ENCODE measurements at regions of chr14 and their contacts with region 1.

Region 1: DNA sequence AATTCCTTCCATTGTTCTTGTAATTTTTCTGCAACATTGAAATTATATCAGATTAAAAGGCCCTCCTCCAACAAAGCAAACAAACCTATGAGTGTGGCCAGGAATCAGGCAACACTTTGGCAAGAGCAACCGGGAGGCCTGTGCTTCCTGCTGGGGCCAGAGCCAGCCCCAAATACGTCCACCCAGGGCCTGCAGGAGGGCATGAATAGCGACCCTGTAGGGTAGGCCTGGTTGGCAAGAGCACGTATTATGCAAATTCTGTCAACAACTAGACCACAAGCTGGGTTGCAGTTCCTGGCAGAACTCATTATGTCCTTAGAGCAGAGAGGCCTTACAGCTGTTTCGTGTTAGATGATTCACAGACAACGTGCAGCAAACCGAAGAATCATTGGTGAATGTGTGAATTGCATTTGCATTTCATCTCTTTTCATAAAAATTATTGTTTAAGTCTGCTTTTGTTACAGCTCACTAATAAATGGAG is 26.9 kb upstream of the LGALS3 start:
- DNase-seq: peak; percentile 52
- ATAC-seq: peak; percentile 63
- H3K4me3 Mint-ChIP-seq: peak overlapping the region; percentile 70
- H3K27ac Mint-ChIP-seq: peak overlapping the region; percentile 99
- H3K4me1 Mint-ChIP-seq: peaks cover 60% of the 10 kb centered on the region
- H3K27me3 Mint-ChIP-seq: no peaks in the 10 kb centered on the region

Region 2: GRCh38 chr14:55015006-55015405 is 87.2 kb before region 1 on chr14:
- POLR2A ChIA-PET with region 1: no interaction called
- DNase-seq: no peak
- ATAC-seq: no peak
- H3K4me3 Mint-ChIP-seq: no peak overlapping the region
- H3K27ac Mint-ChIP-seq: no peak overlapping the region
- H3K4me1 Mint-ChIP-seq: peaks cover 8% of the 10 kb centered on the region
- H3K27me3 Mint-ChIP-seq: no peaks in the 10 kb centered on the region

Region 3: GRCh38 chr14:55129428-55130195 is 27.4 kb after region 1 on chr14:
- POLR2A ChIA-PET with region 1: interaction called, 55 read pairs
- DNase-seq: peak; percentile 77
- ATAC-seq: peak; percentile 76
- H3K4me3 Mint-ChIP-seq: peak overlapping the region; percentile 85
- H3K27ac Mint-ChIP-seq: peak overlapping the region; percentile 27
- H3K4me1 Mint-ChIP-seq: peaks cover 43% of the 10 kb centered on the region
- H3K27me3 Mint-ChIP-seq: peaks cover 14% of the 10 kb centered on the region